ENCODE measurements at regions of chr11 and their contacts with region 1.

Region 1: DNA sequence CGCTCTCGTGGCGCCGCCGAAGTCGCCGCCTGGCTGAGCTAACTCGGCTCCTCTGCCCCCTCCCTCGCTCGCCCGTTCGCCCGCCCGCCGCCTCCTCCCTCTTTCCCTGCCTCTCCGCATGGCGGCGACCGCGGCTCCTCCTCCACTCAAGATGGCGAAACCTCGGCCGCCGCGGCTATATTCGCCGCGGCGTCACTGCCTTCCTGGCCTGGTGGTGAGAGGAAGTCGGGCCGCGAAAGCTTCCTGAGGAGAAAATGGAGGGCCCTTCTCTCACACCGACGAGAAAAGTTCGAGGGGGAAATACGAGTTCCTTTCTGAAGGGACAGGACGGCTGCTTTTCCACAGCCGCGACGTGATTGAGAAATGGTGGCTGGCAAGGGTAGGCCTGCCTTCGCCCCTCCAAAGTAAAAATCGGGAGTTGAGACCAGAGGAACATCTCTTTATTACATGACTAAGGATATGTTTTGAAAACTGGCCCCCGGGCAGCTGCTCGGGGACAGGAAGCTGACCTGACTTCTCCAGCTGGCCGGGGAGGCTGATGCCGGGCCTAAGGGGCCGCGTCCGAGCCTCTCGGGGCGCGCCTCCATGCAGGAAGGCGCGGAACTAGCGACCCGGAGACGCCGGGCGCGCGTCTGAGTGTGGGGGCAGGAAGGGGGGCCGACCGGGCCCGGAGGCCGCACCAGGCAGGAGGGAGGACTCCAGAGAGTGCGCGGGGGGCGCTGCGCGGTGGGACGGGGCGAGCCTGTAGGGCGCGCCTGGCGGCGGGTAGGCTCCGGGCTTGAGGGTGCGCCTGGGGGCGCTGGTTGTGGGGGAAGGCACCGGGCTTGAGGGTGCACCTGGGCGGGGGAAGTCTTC is at the start of gene DDX6:
- DNase-seq: peak; percentile 85
- H3K4me3 Mint-ChIP-seq: peak within 1 kb of the TSS; percentile 99
- H3K27ac Mint-ChIP-seq: peak within 1 kb of the TSS; percentile 100
- H3K4me1 Mint-ChIP-seq: peaks cover 5% of the 10 kb centered on the region
- H3K27me3 Mint-ChIP-seq: no peaks in the 10 kb centered on the region
- CTCF ChIP-seq: no peak
- total RNA-seq, gene DDX6: 111 and 143 TPM in 2 replicates

Region 2: DNA sequence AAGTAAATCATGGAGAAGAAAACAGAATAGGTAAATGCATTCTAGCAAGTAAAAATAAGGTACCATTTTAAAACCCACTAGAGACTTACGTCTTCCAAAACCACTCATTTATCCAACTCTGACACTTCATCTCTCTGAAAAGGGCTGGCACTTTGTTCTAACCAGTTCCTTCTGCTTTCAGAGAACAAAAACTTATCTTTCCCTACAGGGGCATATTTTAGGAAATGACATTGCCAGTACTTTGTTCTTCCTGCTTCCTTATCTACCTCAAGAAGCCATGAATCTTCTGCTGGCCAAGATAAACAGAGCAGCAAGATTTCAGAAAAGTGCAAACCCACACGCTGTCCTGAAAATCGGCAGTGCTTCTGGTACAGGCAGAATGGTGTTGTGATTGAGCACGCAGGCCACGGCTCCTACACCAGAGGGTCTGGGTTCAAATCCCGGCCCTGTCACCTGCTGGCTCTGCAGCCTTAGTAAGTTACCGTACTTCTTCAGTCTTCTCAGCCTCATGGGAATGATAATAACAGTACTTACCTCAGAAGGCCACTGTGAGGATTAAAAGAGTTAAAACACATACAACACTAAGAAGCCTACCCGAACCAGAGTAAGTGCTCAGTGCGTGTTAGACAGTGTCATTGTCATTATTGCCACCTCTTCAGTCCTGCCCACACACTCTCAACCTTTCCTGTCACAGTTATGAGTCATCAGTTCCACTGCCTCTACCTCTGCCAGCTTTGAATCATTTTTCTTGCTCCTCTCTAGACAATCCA is 550.2 kb before region 1 on chr11:
- CTCF ChIA-PET with region 1: no interaction called
- POLR2A ChIA-PET with region 1: no interaction called
- intact Hi-C with region 1: no loop called
- DNase-seq: peak; percentile 57
- H3K4me3 Mint-ChIP-seq: peak overlapping the region; percentile 35
- H3K27ac Mint-ChIP-seq: peak overlapping the region; percentile 70
- H3K4me1 Mint-ChIP-seq: peaks cover 25% of the 10 kb centered on the region
- H3K27me3 Mint-ChIP-seq: no peaks in the 10 kb centered on the region
- CTCF ChIP-seq: no peak

Region 3: DNA sequence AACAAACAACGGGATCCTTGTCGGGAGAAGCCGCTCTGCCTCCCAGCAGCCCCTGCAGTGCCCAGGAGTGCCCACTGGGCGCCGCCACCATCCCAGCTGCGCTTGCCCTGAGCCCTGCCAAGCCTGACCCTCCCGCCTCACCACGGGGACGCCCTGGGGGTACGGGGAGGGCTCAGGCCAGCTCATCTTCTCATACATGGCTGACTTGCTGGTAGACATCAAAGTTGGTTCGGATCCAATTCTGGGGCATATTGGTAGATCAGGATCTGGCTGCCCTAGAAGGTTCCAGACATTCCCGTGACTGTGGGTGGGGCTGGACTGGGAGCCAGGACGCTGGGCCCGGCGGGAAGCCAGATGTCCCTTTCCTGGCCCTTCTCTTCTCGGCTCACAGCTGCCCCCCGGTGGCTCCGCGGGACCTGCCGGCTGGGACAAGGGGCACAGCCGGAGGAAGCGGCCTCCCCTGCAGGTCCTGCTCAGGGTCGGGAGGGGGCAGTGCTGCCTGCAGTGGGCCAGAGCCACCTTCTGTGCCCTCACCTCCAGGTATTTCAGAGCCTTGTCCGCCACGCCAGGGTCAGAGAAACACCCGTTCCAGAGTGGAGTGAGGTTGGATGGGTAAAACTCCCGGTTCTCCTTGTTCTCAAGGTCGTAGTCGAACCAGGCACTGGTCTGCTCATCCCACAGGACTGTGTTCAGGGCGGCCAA is 101.3 kb before region 1 on chr11:
- CTCF ChIA-PET with region 1: interaction called, 58 read pairs
- POLR2A ChIA-PET with region 1: interaction called, 98 read pairs
- intact Hi-C with region 1: loop called (anchors 1 kb)
- DNase-seq: peak; percentile 97
- H3K4me3 Mint-ChIP-seq: peak overlapping the region; percentile 25
- H3K27ac Mint-ChIP-seq: peak overlapping the region; percentile 67
- H3K4me1 Mint-ChIP-seq: peaks cover 23% of the 10 kb centered on the region
- H3K27me3 Mint-ChIP-seq: no peaks in the 10 kb centered on the region
- CTCF ChIP-seq: peak; percentile 85

Region 4: DNA sequence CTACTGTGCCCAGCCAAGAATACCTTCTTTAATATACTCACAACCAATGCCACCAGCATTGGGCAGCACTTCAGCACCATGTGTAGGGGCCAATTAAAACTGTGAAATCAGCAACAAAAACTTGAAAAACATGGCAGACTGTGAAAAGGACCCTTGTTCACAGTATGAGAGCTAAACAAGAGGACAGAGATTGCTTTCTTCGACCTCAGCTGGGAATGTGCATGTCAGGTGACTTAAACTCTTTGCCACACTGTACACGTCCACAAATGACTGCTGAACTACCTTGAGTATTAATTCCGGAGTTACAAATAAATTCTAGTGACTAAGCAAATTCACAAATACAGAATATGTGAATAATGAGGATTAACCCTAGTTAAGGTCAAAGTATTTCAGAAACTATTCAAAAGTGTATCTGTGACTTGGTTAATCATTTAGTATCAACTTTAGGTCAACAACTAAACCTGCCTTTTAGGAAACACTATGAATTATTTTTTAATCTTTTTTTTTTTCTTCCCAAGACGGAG is 33.4 kb before region 1 on chr11:
- CTCF ChIA-PET with region 1: interaction called, 3 read pairs
- POLR2A ChIA-PET with region 1: interaction called, 13 read pairs
- intact Hi-C with region 1: no loop called
- DNase-seq: no peak
- H3K4me3 Mint-ChIP-seq: no peak overlapping the region
- H3K27ac Mint-ChIP-seq: no peak overlapping the region
- H3K4me1 Mint-ChIP-seq: no peaks in the 10 kb centered on the region
- H3K27me3 Mint-ChIP-seq: no peaks in the 10 kb centered on the region
- CTCF ChIP-seq: no peak

Region 5: DNA sequence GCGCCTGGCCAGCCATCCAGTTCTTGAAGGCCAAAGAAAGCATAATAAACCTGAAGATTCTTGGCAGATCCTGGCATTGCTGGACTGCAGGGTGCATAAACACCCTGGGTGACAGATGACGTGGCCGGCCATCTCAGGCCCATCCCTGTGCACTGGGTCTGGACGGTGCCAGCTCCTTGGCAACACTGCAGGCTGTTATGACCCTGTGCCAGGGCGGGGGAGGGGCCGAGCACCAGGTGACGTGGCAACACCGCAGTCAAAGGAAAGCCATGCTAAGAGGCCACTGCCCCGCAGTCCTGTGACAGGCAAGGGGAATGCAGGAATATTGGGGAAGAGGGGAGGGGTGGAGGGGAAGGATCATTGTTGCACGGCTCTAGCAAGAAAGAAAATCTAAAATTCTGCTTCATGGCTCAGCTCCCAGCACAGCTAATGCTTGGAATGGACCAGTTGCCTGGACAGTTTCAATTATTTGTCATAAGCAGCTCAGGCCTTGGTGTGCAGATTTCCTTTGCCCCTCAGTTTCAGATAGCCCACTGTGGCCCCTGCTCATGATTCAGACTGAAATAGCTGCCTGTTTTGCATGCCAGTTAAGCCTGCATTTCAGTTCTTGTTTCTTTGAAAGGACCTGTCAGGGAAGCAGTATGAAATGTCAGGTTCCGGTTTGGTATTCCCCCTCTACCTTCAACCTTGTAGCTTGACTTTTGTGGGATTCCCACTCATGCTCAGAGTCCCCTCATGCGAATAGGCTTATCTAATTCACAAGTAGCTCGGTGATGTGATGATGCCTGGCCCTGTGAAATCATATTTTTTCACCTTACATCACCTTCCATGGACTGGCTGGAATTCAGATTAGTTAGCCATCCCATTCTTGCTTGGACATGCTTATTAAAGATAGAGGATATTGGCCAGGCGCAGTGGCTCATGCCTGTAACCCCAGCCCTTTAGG is 29.3 kb after region 1 on chr11:
- CTCF ChIA-PET with region 1: interaction called, 4 read pairs
- POLR2A ChIA-PET with region 1: interaction called, 34 read pairs
- intact Hi-C with region 1: no loop called
- DNase-seq: peak; percentile 92
- H3K4me3 Mint-ChIP-seq: no peak overlapping the region
- H3K27ac Mint-ChIP-seq: peak overlapping the region; percentile 71
- H3K4me1 Mint-ChIP-seq: peaks cover 13% of the 10 kb centered on the region
- H3K27me3 Mint-ChIP-seq: no peaks in the 10 kb centered on the region
- CTCF ChIP-seq: no peak

Region 6: GRCh38 chr11:118895142-118896039 is 104.1 kb after region 1 on chr11:
- CTCF ChIA-PET with region 1: interaction called, 6 read pairs
- POLR2A ChIA-PET with region 1: interaction called, 33 read pairs
- intact Hi-C with region 1: no loop called
- DNase-seq: no peak
- H3K4me3 Mint-ChIP-seq: no peak overlapping the region
- H3K27ac Mint-ChIP-seq: peak overlapping the region; percentile 51
- H3K4me1 Mint-ChIP-seq: peaks cover 5% of the 10 kb centered on the region
- H3K27me3 Mint-ChIP-seq: no peaks in the 10 kb centered on the region
- CTCF ChIP-seq: no peak

Region 7: GRCh38 chr11:118928108-118928870 is 137.0 kb after region 1 on chr11:
- CTCF ChIA-PET with region 1: interaction called, 20 read pairs
- POLR2A ChIA-PET with region 1: interaction called, 3 read pairs
- intact Hi-C with region 1: loop called (anchors 1 kb)
- DNase-seq: peak; percentile 95
- H3K4me3 Mint-ChIP-seq: peak overlapping the region; percentile 84
- H3K27ac Mint-ChIP-seq: peak overlapping the region; percentile 84
- H3K4me1 Mint-ChIP-seq: peaks cover 31% of the 10 kb centered on the region
- H3K27me3 Mint-ChIP-seq: no peaks in the 10 kb centered on the region
- CTCF ChIP-seq: peak; percentile 77